ENCODE measurements at regions of chr20 and their contacts with region 1.

Region 1: GRCh38 chr20:44080646-44081267 is 106.2 kb downstream of the JPH2 start:
- DNase-seq: peak; percentile 53 to 84 (median 68)
- ATAC-seq: peak; percentile 99
- H3K4me3 ChIP-seq: no peak overlapping the region
- H3K27ac ChIP-seq: no peak overlapping the region
- H3K4me1 ChIP-seq: peaks cover 0 to 7% of the 10 kb centered on the region in 2 donors
- H3K27me3 ChIP-seq: no peaks in the 10 kb centered on the region
- CTCF ChIP-seq: peak; percentile 99

Region 2: DNA sequence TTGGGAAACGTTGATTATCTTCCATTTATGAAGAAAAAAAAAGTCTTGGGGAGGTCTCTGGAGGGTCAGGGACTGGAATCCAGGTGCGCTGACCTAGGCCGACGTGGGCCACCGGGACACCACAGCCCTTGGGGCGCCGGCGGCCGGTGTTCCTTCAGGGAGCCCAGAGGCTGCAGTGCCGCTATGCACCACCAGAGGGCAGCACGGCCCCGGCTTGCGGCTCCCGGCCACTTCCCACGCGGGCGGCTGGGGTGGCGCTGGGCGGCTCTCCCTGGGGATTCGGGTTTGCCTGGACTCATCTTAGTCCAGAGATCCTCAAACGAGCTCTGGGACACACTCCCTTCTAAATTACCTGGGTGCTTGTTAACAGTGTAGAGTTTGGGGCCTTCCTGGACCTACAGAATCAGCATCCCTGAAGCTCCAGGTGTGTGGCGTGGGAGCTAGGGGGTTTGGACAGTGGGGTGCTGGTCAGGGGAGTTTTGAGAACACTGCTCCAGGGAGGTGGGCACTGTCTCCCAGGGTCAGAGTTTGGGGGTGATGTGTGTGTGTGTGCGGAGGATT is 330.9 kb before region 1 on chr20:
- intact Hi-C with region 1: loop called (anchors 5 to 10 kb)
- DNase-seq: peak; percentile 35 to 99 (median 66)
- ATAC-seq: peak; percentile 96
- H3K4me3 ChIP-seq: no peak overlapping the region
- H3K27ac ChIP-seq: no peak overlapping the region
- H3K4me1 ChIP-seq: peaks cover 4 to 79% of the 10 kb centered on the region in 2 donors
- H3K27me3 ChIP-seq: peaks cover 0 to 35% of the 10 kb centered on the region in 2 donors
- CTCF ChIP-seq: peak; percentile 99 to 100

Region 3: DNA sequence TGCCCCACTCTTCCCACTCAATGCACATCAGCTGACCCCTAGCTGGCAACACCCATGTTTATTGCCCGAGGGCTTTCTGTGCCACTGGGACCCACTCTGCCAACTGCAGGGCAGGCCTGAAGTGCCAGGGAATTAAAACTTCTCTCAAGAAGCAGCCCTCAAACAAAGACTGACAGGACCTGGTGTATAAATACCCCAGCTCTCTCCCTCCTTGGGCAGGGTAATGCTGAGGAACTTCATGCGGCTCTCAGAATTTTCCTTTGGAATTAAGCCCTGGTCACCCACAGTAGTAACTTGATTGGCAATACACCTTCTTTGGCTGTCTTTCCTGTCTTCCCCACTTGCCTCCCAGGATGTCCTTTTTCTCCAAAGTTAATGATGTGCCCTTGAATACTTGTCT is 161.0 kb after region 1 on chr20:
- intact Hi-C with region 1: no loop called
- DNase-seq: no peak
- ATAC-seq: no peak
- H3K4me3 ChIP-seq: no peak overlapping the region
- H3K27ac ChIP-seq: no peak overlapping the region
- H3K4me1 ChIP-seq: no peaks in the 10 kb centered on the region
- H3K27me3 ChIP-seq: peaks cover 0 to 8% of the 10 kb centered on the region in 2 donors
- CTCF ChIP-seq: no peak

Measured in left lung (tissue), 14 donors.